Sigmoid colon (tissue), 7 donors: ENCODE measurements at regions of chr1 and their contacts with region 1.

Region 1: GRCh38 chr1:203172128-203173010 is 3.3 kb downstream of the MYBPH start:
- DNase-seq: peak; percentile 79
- H3K4me3 ChIP-seq: no peak overlapping the region
- H3K27ac ChIP-seq: no peak overlapping the region
- H3K4me1 ChIP-seq: no peaks in the 10 kb centered on the region
- H3K27me3 ChIP-seq: peaks cover 0 to 3% (median 0%) of the 10 kb centered on the region in 3 donors
- CTCF ChIP-seq: peak; percentile 42 to 84 (median 70)
- EP300 ChIP-seq: no peak
- POLR2A ChIP-seq: no peak

Region 2: GRCh38 chr1:203101915-203102634 is 70.3 kb before region 1 on chr1:
- intact Hi-C with region 1: no loop called
- DNase-seq: no peak
- H3K4me3 ChIP-seq: no peak overlapping the region
- H3K27ac ChIP-seq: no peak overlapping the region
- H3K4me1 ChIP-seq: no peaks in the 10 kb centered on the region
- H3K27me3 ChIP-seq: no peaks in the 10 kb centered on the region
- CTCF ChIP-seq: no peak
- EP300 ChIP-seq: no peak
- POLR2A ChIP-seq: no peak

Region 3: DNA sequence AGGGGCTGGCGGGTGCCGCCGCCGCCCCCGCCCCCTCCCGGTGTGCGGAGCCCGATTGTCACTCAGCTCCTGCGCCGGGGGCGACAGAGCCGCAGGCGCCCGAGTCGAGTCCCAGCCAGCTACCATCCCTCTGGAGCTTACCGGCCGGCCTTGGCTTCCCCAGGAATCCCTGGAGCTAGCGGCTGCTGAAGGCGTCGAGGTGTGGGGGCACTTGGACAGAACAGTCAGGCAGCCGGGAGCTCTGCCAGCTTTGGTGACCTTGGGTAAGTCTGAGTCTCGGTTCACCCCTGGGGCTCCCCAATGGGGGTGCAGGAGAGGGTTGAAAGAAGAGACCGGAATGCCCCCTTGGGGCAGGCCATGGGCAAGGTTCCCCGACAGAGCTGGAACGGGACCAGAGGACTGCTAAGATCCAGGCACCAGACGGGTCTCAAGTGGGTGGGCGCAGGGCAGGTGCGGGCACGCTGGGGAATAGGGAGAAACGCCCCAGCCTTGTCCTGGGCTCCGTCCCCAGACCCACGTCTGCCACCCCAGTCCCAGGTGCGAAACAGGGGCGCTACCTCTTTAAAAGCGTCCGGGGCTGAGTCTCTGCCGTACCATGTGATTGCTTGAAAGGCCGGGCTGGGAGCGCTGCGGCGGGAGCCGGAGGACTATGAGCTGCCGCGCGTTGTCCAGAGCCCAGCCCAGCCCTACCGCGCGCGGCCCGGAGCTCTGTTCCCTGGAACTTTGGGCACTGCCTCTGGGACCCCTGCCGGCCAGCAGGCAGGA is 44.5 kb before region 1 on chr1 and contains the start of gene ADORA1:
- intact Hi-C with region 1: loop called (anchors 5 kb)
- DNase-seq: peak; percentile 87
- H3K4me3 ChIP-seq: peak within 1 kb of the TSS; percentile 18 to 51 (median 38)
- H3K27ac ChIP-seq: peak within 1 kb of the TSS in 2 of 4 donors; percentile 27 to 50
- H3K4me1 ChIP-seq: peaks cover 0 to 27% (median 24%) of the 10 kb centered on the region in 4 donors
- H3K27me3 ChIP-seq: peaks cover 0 to 25% (median 19%) of the 10 kb centered on the region in 3 donors
- CTCF ChIP-seq: no peak
- EP300 ChIP-seq: no peak
- POLR2A ChIP-seq: no peak
- total RNA-seq, gene ADORA1: 0.33 to 1.1 TPM in 2 of 4 donors, not detected in the others

Region 4: GRCh38 chr1:203408486-203409427 is 236.4 kb after region 1 on chr1:
- intact Hi-C with region 1: no loop called
- DNase-seq: peak; percentile 97
- H3K4me3 ChIP-seq: peak overlapping the region in 1 of 4 donors; percentile 5
- H3K27ac ChIP-seq: peak overlapping the region; percentile 76 to 90 (median 84)
- H3K4me1 ChIP-seq: peaks cover 0 to 70% (median 63%) of the 10 kb centered on the region in 4 donors
- H3K27me3 ChIP-seq: no peaks in the 10 kb centered on the region
- CTCF ChIP-seq: no peak
- EP300 ChIP-seq: peak in 2 of 4 donors; percentile 55 to 87
- POLR2A ChIP-seq: peak in 1 of 2 donors; percentile 22